PC-9 (cell line): ENCODE measurements at regions of chr7 and their contacts with region 1.

Region 1: GRCh38 chr7:3174515-3175284 is 126.4 kb upstream of the SDK1 start:
- DNase-seq: no peak
- H3K4me3 ChIP-seq: no peak overlapping the region
- H3K27ac ChIP-seq: no peak overlapping the region
- H3K4me1 ChIP-seq: no peaks in the 10 kb centered on the region
- H3K27me3 ChIP-seq: no peaks in the 10 kb centered on the region
- CTCF ChIP-seq: no peak

Region 2: DNA sequence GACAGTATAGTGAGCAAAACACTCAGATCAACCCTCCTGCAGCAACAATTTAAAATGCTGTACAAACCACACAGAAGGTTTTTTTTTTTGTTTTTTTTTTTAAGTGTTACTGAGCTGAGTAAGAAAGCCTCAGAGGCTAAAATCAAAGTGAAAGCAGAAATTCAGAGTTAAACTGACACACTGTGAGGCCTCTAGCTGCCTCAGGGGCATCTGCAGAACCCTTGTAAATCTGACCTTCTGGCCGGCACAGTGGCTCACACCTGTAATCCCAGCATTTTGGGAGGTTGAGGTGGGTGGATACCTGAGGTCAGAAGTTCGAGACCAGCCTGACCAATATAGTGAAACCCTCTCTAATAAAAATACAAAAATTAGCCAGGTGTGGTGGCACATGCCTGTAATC is 323.2 kb before region 1 on chr7:
- CTCF ChIA-PET with region 1: interaction called, 21 read pairs
- POLR2A ChIA-PET with region 1: no interaction called
- intact Hi-C with region 1: no loop called
- DNase-seq: no peak
- H3K4me3 ChIP-seq: no peak overlapping the region
- H3K27ac ChIP-seq: no peak overlapping the region
- H3K4me1 ChIP-seq: 0 out of 2 replicates have a peak, but pooled peaks cover 6% of the 10 kb centered on the region
- H3K27me3 ChIP-seq: no peaks in the 10 kb centered on the region
- CTCF ChIP-seq: no peak

Region 3: DNA sequence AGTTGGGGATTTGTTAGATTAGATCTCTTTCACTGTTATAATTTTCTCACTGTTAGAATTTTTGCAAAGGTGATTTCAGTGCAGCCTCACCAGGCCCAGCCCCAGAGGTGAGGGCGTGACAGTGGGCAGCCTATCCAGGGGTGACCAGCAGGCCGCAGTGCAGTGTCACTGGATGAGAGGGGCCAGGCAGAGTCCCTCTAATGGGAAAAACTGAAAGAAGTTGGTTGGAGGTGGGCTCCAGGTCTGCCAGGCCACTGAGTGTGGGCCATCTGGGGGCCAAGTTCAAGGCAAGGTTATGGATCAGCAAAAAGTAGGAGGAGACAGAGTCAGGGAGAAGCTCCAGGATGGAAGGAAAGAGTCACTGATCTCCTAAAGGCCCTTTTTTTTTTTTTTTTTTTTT is 35.8 kb after region 1 on chr7:
- CTCF ChIA-PET with region 1: interaction called, 12 read pairs
- POLR2A ChIA-PET with region 1: no interaction called
- intact Hi-C with region 1: no loop called
- DNase-seq: no peak
- H3K4me3 ChIP-seq: no peak overlapping the region
- H3K27ac ChIP-seq: no peak overlapping the region
- H3K4me1 ChIP-seq: peaks cover 13% of the 10 kb centered on the region
- H3K27me3 ChIP-seq: no peaks in the 10 kb centered on the region
- CTCF ChIP-seq: no peak